Naive thymus-derived CD4-positive, alpha-beta T cell (primary cell): ENCODE measurements at regions of chr17 and their contacts with region 1.

Region 1: DNA sequence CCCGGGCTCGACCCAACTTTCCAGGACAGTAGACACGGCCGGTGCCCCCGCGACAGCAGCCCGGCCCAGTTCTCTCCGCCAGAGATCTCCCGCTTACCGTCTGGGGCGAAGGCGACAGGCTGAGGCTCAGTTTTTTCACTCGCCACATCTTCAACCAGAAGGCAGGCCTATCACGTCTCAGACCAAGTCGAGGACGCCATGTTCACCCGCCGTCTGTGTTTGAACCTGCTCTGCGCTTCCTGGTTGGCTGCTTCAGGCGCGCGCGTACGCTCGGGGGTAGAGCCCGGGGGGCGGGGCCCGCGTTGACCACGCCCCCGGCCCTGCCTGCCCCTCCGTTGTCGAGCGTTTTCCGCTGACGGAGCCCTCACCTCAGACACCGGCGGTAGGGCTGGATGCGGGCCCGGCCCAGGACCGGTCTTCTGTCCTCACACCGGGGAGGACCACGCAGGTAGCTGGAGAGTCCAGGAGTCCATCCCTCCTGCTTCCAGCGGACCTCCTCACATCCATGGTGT is at the start of gene SPAG5:
- DNase-seq: peak; percentile 93 to 97 (median 96)
- ATAC-seq: peak; percentile 98
- H3K4me3 ChIP-seq: peak within 1 kb of the TSS; percentile 93
- H3K4me3 Mint-ChIP-seq: peak within 1 kb of the TSS; percentile 88 to 99 (median 94)
- H3K27ac ChIP-seq: peak within 1 kb of the TSS; percentile 97
- H3K27ac Mint-ChIP-seq: peak within 1 kb of the TSS; percentile 96 to 99 (median 98)
- H3K4me1 ChIP-seq: peaks cover 8 to 10% of the 10 kb centered on the region in 2 donors
- H3K4me1 Mint-ChIP-seq: peaks cover 18 to 25% (median 21%) of the 10 kb centered on the region in 7 donors
- H3K27me3 ChIP-seq: no peaks in the 10 kb centered on the region
- H3K27me3 Mint-ChIP-seq: no peaks in the 10 kb centered on the region
- total RNA-seq, gene SPAG5: 10.4 to 95.3 (median 18.4) TPM

Region 2: GRCh38 chr17:28571255-28572122 is 27.4 kb before region 1 on chr17 and contains the start of gene PIGS:
- CTCF ChIA-PET with region 1: interaction called, 8 read pairs
- POLR2A ChIA-PET with region 1: interaction called, 172 read pairs
- intact Hi-C with region 1: loop called (anchors 1 kb)
- DNase-seq: peak; percentile 72 to 93 (median 84)
- ATAC-seq: peak; percentile 99
- H3K4me3 ChIP-seq: peak within 1 kb of the TSS; percentile 78
- H3K4me3 Mint-ChIP-seq: peak within 1 kb of the TSS; percentile 93 to 99 (median 96)
- H3K27ac ChIP-seq: peak within 1 kb of the TSS; percentile 90
- H3K27ac Mint-ChIP-seq: peak within 1 kb of the TSS; percentile 84 to 97 (median 93)
- H3K4me1 ChIP-seq: peaks cover 28 to 31% of the 10 kb centered on the region in 2 donors
- H3K4me1 Mint-ChIP-seq: peaks cover 49 to 76% (median 68%) of the 10 kb centered on the region in 7 donors
- H3K27me3 ChIP-seq: no peaks in the 10 kb centered on the region
- H3K27me3 Mint-ChIP-seq: no peaks in the 10 kb centered on the region
- total RNA-seq, gene PIGS: 58.5 to 71.2 (median 62.4) TPM

Region 3: GRCh38 chr17:28576758-28577465 is 21.9 kb before region 1 on chr17 and contains the start of gene ALDOC:
- CTCF ChIA-PET with region 1: interaction called, 8 read pairs
- POLR2A ChIA-PET with region 1: interaction called, 172 read pairs
- intact Hi-C with region 1: loop called (anchors 1 kb)
- DNase-seq: peak; percentile 95 to 99 (median 98)
- ATAC-seq: peak; percentile 100
- H3K4me3 ChIP-seq: peak within 1 kb of the TSS; percentile 50
- H3K4me3 Mint-ChIP-seq: peak within 1 kb of the TSS; percentile 83 to 96 (median 86)
- H3K27ac ChIP-seq: peak within 1 kb of the TSS; percentile 52
- H3K27ac Mint-ChIP-seq: peak within 1 kb of the TSS; percentile 79 to 95 (median 89)
- H3K4me1 ChIP-seq: peaks cover 19 to 23% of the 10 kb centered on the region in 2 donors
- H3K4me1 Mint-ChIP-seq: peaks cover 20 to 70% (median 38%) of the 10 kb centered on the region in 7 donors
- H3K27me3 ChIP-seq: no peaks in the 10 kb centered on the region
- H3K27me3 Mint-ChIP-seq: no peaks in the 10 kb centered on the region
- total RNA-seq, gene ALDOC: 24.5 to 159 (median 40.1) TPM

Region 4: DNA sequence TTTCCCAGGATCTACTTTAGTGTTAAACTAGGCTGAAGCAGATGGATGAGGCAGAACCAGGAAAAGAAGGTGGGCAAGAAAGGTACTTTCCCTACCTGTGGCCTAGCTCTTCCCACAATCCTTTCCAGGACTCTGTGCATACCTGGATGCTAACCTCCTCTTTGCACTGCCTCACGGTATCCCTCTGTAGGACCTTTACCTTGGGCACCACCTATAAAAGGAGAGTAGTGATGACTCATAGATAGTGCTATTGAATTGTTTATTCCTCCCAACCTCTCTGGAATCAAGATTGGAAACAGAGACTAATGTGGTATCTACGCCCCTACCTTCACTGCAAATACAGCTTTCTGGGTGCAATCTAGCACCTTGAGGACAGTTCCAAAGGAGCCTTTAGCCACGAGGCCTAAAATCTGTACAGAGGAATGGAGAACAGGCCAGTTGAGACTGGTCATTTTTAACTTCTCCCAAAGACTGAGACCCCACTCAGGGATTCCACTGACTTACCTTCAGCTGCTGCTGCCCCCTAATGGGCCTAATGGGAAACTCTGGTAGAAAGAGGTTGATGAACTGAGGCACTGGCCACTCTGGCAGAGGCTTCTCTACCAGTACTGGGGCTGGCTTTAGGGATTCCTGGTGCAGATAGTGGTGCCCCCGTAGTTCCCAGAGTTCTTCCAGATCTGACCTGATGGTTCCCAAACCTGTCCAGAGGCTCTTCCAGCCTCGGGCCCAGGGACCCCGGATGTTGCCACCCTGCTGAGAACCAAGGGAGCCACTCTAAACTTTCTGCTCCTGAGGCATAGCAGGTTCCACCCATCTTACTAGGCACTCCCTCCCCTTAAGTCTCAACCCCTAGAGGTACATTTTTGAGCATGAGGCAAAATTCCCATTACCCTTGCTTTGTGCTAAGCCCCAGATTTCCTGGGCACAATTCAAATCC is 14.3 kb after region 1 on chr17:
- CTCF ChIA-PET with region 1: interaction called, 4 read pairs
- POLR2A ChIA-PET with region 1: interaction called, 8 read pairs
- intact Hi-C with region 1: loop called in 1 of 2 experiments (anchors 1 kb)
- DNase-seq: peak in 7 of 9 donors; percentile 27 to 45 (median 41)
- ATAC-seq: peak; percentile 70
- H3K4me3 ChIP-seq: no peak overlapping the region
- H3K4me3 Mint-ChIP-seq: no peak overlapping the region
- H3K27ac ChIP-seq: no peak overlapping the region
- H3K27ac Mint-ChIP-seq: peak overlapping the region in 6 of 9 donors; percentile 38 to 75 (median 64)
- H3K4me1 ChIP-seq: no peaks in the 10 kb centered on the region
- H3K4me1 Mint-ChIP-seq: peaks cover 6 to 19% (median 10%) of the 10 kb centered on the region in 7 donors
- H3K27me3 ChIP-seq: no peaks in the 10 kb centered on the region
- H3K27me3 Mint-ChIP-seq: no peaks in the 10 kb centered on the region

Region 5: GRCh38 chr17:28710861-28711722 is 112.2 kb after region 1 on chr17:
- CTCF ChIA-PET with region 1: no interaction called
- POLR2A ChIA-PET with region 1: interaction called, 3 read pairs
- intact Hi-C with region 1: loop called (anchors 1 to 5 kb)
- DNase-seq: peak; percentile 71 to 97 (median 85)
- ATAC-seq: peak; percentile 95
- H3K4me3 ChIP-seq: peak overlapping the region; percentile 95
- H3K4me3 Mint-ChIP-seq: peak overlapping the region; percentile 76 to 94 (median 92)
- H3K27ac ChIP-seq: peak overlapping the region; percentile 83
- H3K27ac Mint-ChIP-seq: peak overlapping the region; percentile 85 to 98 (median 93)
- H3K4me1 ChIP-seq: peaks cover 9 to 12% of the 10 kb centered on the region in 2 donors
- H3K4me1 Mint-ChIP-seq: peaks cover 12 to 29% (median 19%) of the 10 kb centered on the region in 7 donors
- H3K27me3 ChIP-seq: no peaks in the 10 kb centered on the region
- H3K27me3 Mint-ChIP-seq: peaks cover 0 to 14% (median 6%) of the 10 kb centered on the region in 5 donors

Region 6: GRCh38 chr17:28717578-28718333 is 118.9 kb after region 1 on chr17 and contains the start of gene RAB34:
- CTCF ChIA-PET with region 1: no interaction called
- POLR2A ChIA-PET with region 1: interaction called, 7 read pairs
- intact Hi-C with region 1: loop called (anchors 2 to 5 kb)
- DNase-seq: peak in 2 of 9 donors; percentile 18 to 21
- ATAC-seq: no peak
- H3K4me3 ChIP-seq: no peak within 1 kb of the TSS
- H3K4me3 Mint-ChIP-seq: peak within 1 kb of the TSS; percentile 58 to 99 (median 76)
- H3K27ac ChIP-seq: peak within 1 kb of the TSS; percentile 52
- H3K27ac Mint-ChIP-seq: peak within 1 kb of the TSS; percentile 59 to 97 (median 85)
- H3K4me1 ChIP-seq: peaks cover 26 to 30% of the 10 kb centered on the region in 2 donors
- H3K4me1 Mint-ChIP-seq: peaks cover 17 to 57% (median 35%) of the 10 kb centered on the region in 7 donors
- H3K27me3 ChIP-seq: no peaks in the 10 kb centered on the region
- H3K27me3 Mint-ChIP-seq: peaks cover 0 to 24% (median 6%) of the 10 kb centered on the region in 5 donors
- total RNA-seq, gene RAB34: 11.0 to 50.2 (median 16.4) TPM

Region 7: GRCh38 chr17:28734813-28735722 is 136.2 kb after region 1 on chr17:
- CTCF ChIA-PET with region 1: no interaction called
- POLR2A ChIA-PET with region 1: no interaction called
- intact Hi-C with region 1: no loop called
- DNase-seq: no peak
- ATAC-seq: no peak
- H3K4me3 ChIP-seq: no peak overlapping the region
- H3K4me3 Mint-ChIP-seq: no peak overlapping the region
- H3K27ac ChIP-seq: no peak overlapping the region
- H3K27ac Mint-ChIP-seq: no peak overlapping the region
- H3K4me1 ChIP-seq: peaks cover 0 to 5% of the 10 kb centered on the region in 2 donors
- H3K4me1 Mint-ChIP-seq: peaks cover 5 to 19% (median 14%) of the 10 kb centered on the region in 7 donors
- H3K27me3 ChIP-seq: no peaks in the 10 kb centered on the region
- H3K27me3 Mint-ChIP-seq: no peaks in the 10 kb centered on the region